Adrenal gland (tissue), 19 donors: ENCODE measurements at regions of chr4 and their contacts with region 1.

Region 1: DNA sequence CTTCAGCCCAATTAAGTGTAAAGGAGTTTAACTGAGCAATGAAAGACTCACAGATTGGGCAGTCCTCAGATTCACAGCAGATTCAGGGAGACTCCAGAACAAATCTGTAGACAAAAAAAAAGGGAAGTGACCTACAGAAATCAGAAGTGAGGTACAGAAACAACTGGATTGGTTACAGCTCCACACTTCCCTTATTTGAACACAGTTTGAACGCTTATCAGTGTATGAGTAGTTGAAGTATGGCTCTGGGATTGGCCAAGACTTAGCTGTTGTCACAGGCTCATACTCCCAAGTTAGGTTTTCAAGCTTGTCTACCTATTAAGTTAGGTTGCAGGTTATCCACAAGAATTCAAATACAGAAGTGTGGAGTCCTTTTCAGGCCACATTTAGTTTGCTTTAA is 112.4 kb upstream of the ELOVL6 start:
- DNase-seq: no peak
- H3K4me3 ChIP-seq: no peak overlapping the region
- H3K27ac ChIP-seq: no peak overlapping the region
- H3K4me1 ChIP-seq: no peaks in the 10 kb centered on the region
- H3K27me3 ChIP-seq: no peaks in the 10 kb centered on the region
- CTCF ChIP-seq: no peak
- POLR2A ChIP-seq: no peak

Region 2: GRCh38 chr4:110172972-110173371 is 137.8 kb before region 1 on chr4:
- intact Hi-C with region 1: no loop called
- DNase-seq: no peak
- H3K4me3 ChIP-seq: no peak overlapping the region
- H3K27ac ChIP-seq: no peak overlapping the region
- H3K4me1 ChIP-seq: no peaks in the 10 kb centered on the region
- H3K27me3 ChIP-seq: no peaks in the 10 kb centered on the region
- CTCF ChIP-seq: no peak
- POLR2A ChIP-seq: no peak

Region 3: DNA sequence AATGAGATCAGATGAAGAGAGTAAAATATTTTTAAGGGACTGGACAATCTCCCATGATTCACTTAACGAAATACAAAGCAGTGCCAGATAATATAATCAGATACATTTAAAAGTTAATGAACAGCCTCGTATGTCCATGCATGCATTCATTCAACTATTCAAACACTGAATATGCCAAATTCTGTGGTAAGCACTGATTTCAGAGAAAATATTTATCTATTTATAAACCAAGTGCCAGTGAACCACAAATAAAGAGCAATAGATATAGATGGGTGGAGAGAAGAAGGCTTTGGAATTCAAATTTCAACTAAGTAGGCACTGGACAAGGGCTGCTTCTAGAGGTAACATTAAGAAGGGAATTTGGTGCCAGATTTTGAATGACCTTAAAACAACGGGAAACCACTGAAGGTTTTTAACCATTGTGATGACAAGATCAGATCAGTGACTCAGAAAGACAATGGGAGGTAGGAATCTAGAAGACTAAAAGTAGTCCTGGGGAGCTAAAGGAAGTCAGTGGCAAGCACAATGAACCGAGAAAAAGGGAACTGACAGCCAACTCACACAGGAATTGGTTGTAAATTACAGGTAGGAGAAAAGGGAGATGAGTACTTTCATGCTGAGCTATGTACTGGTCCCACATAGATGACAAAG is 126.5 kb before region 1 on chr4:
- intact Hi-C with region 1: no loop called
- DNase-seq: no peak
- H3K4me3 ChIP-seq: no peak overlapping the region
- H3K27ac ChIP-seq: no peak overlapping the region
- H3K4me1 ChIP-seq: peaks cover 0 to 12% of the 10 kb centered on the region in 2 donors
- H3K27me3 ChIP-seq: no peaks in the 10 kb centered on the region
- CTCF ChIP-seq: no peak
- POLR2A ChIP-seq: no peak

Region 4: DNA sequence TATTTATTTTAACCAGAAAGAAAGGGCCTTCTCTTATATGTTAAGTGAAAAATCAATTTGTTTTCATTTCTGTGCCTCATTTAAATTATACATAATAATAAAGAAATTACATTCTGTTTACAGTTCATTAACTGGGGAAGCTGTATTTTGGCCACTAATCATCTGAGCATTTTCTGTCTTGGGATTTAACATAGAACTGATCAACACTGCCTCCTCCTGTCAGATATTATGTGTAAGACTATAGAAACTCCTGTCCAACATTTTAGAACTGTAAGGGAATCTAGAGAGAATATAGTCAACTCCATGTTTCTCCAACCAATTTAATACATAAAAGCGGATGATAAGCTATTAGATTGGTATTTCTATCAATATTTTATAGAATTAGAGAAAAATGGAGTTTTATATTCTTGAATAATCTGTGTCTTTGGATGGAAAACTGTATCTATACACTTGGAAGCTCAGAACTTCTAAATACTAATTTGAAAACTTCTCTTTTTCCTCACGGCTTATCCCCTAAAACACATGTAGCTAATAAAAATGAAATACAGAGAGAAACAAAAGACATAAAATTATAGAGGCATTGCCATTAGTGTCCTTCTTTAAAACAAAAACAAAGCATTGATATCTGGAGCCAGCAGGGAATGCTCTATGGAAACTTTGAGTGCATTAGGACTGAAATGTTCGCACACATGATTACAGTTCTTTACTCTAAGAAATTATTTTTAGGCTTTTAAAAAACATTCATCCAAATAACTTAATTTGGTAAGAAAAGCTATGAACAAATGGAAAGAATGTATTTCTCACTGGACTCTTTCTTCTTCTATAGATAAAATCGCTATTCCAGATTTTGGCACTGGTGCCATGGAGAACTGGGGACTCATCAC is 198.3 kb after region 1 on chr4:
- intact Hi-C with region 1: loop called in 1 of 2 experiments (anchors 5 kb)
- DNase-seq: no peak
- H3K4me3 ChIP-seq: no peak overlapping the region
- H3K27ac ChIP-seq: no peak overlapping the region
- H3K4me1 ChIP-seq: no peaks in the 10 kb centered on the region
- H3K27me3 ChIP-seq: no peaks in the 10 kb centered on the region
- CTCF ChIP-seq: peak in 4 of 6 experiments; percentile 24 to 42 (median 33)
- POLR2A ChIP-seq: no peak

Region 5: DNA sequence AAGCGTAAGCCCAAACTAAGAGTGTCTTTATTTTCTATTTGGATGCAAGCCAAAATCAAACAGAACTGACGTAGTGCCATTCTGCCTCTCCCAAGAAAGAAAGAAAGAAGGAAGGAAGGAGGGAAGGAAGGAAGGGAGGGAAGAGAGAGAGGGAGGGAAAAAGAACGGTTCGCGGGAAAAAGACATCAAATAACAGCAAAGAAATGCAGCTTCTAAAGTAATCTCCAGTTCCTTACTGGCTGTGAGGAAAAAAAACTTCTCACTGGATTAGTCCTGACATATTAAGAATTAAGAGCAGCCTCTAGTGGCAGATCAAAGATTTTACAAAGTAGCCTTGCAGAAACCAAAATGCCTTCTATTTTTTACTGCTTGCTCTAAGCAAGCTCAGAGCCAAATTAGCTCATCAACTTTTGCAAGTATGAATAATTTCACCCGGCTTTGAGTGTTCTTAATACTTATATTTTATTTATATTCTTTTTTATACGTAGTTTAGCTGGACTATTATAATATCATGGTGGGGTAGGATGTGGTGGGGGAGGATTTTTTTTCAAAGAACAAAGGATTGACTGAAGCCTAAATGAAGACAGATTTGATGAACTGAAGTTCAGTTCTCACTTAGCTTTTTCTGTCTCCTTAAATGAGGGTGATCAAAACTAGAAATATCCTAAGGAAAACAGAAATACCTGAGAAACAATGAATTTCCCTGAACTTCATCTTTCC is 275.5 kb after region 1 on chr4:
- intact Hi-C with region 1: no loop called
- DNase-seq: no peak
- H3K4me3 ChIP-seq: no peak overlapping the region
- H3K27ac ChIP-seq: no peak overlapping the region
- H3K4me1 ChIP-seq: no peaks in the 10 kb centered on the region
- H3K27me3 ChIP-seq: no peaks in the 10 kb centered on the region
- CTCF ChIP-seq: peak; percentile 12 to 44 (median 36)
- POLR2A ChIP-seq: no peak